T-cell (primary cell): ENCODE measurements at regions of chr4 and their contacts with region 1.

Region 1: DNA sequence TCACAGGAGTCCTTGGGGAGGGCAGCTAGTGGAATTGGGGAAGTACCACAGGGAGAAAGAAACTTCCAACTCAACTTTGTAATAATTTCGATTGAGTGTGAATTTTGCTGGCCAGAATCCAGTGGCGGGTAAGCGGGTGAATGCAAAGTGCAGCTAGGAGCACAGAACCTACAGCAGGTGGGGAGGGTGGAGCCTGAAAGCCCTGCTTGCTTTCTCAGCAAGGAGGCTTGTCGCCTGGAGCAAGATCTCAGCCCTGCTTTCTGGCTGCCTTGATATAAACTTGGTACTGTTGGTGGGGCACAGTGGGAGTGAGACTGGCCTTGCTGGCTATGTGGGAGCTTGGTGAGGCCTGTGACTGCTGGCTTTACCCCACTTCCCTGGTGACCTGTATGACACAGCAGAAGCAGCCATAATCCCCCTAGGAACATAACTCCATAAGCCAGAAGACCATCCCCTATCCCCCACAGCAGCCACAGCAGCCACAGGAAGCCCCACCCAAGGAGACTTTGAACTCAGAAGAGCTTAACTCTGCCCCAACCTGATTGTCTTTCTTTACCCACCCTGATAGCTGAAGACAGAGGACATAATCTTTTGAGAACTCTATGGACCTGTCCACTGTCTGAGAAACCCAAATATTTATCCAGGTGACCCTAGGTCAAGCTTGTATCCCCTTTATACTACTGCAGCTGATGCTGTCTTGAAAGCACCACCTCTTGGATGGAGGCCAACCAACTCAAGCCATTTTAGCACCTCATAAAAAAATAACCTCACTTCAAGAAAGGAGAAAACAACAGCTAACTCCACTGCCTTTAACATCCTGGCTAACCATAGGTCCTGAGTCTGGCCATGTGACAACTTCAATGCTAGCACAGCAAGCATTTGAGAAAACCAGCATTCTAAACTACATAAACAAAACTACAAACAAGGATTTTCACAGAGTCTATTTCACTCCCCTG is 87.2 kb upstream of the PDE5A start:
- DNase-seq: no peak
- ATAC-seq: no peak
- H3K4me3 ChIP-seq: no peak overlapping the region
- H3K4me3 Mint-ChIP-seq: no peak overlapping the region
- H3K27ac ChIP-seq: no peak overlapping the region
- H3K27ac Mint-ChIP-seq: no peak overlapping the region
- H3K4me1 ChIP-seq: no peaks in the 10 kb centered on the region
- H3K4me1 Mint-ChIP-seq: no peaks in the 10 kb centered on the region
- H3K27me3 ChIP-seq: peaks cover 0 to 5% of the 10 kb centered on the region in 2 experiments
- H3K27me3 Mint-ChIP-seq: peaks cover 3 to 12% of the 10 kb centered on the region in 2 donors

Region 2: DNA sequence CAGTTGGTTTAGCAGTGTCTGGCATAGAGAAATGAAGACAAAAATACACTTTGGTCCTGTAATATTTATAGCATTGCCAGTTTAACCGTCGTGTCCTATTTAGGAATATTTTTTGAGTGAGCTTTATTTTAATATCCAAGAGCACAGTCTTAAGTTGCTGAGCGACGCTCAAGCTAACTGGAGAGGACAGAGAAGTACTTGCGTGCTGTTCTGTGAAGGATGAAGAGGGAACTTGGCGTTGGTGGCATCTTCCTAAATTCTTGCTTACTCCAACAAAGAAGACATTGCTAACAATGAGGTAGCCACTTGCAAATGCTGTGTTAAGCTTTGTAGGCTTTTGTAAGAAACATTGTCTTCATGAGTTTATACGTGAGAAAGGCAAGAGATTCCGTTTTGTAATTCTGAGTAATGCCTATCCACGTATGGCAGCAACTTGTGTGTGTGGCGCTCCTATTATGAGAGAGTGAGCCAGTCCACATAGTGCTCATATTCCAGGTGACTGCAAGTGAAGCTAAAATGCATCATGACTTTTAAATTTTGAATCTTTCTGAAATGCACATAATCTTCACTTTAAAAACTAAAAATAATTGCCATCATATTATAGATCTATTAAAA is 776.5 kb before region 1 on chr4:
- CTCF ChIA-PET with region 1: no interaction called
- POLR2A ChIA-PET with region 1: interaction called in 1 of 2 experiments, 20 read pairs
- DNase-seq: no peak
- ATAC-seq: no peak
- H3K4me3 ChIP-seq: no peak overlapping the region
- H3K4me3 Mint-ChIP-seq: no peak overlapping the region
- H3K27ac ChIP-seq: no peak overlapping the region
- H3K27ac Mint-ChIP-seq: no peak overlapping the region
- H3K4me1 ChIP-seq: no peaks in the 10 kb centered on the region
- H3K4me1 Mint-ChIP-seq: no peaks in the 10 kb centered on the region
- H3K27me3 ChIP-seq: no peaks in the 10 kb centered on the region
- H3K27me3 Mint-ChIP-seq: peaks cover 18 to 21% of the 10 kb centered on the region in 2 donors

Region 3: DNA sequence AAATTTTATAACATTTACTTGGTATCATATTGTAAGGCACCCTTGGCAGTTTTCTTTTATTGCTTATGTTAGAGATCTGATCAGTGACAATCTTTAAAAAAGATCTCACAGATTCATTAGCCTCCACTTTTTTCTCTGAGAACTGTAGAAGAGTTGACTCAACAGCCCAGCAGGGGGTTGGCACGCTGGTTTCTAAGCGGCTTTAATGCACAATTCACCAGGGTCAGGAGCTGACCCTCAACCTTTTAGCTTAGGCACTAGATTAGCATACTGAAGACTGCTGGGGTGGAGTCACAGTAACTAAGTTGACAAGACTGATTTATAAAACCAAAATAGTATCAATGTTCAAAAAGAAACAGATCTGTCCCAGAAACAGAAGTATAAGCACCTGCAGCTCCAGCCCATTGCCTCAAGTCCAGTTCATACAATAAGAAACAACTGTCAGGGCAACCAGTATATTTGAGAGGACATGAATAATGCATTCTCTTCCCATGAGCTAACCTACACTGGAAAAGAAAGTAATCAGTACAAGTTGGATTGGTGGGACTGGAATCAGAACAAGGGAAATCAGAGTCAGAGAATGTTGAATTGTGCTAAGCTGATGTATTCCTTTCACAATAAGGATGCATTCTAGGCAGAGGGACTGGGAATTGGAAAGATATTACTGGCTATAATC is 164.8 kb before region 1 on chr4:
- CTCF ChIA-PET with region 1: no interaction called
- POLR2A ChIA-PET with region 1: no interaction called
- DNase-seq: no peak
- ATAC-seq: no peak
- H3K4me3 ChIP-seq: no peak overlapping the region
- H3K4me3 Mint-ChIP-seq: no peak overlapping the region
- H3K27ac ChIP-seq: no peak overlapping the region
- H3K27ac Mint-ChIP-seq: no peak overlapping the region
- H3K4me1 ChIP-seq: no peaks in the 10 kb centered on the region
- H3K4me1 Mint-ChIP-seq: no peaks in the 10 kb centered on the region
- H3K27me3 ChIP-seq: no peaks in the 10 kb centered on the region
- H3K27me3 Mint-ChIP-seq: no peaks in the 10 kb centered on the region